ENCODE measurements at regions of chr13 and their contacts with region 1.

Region 1: DNA sequence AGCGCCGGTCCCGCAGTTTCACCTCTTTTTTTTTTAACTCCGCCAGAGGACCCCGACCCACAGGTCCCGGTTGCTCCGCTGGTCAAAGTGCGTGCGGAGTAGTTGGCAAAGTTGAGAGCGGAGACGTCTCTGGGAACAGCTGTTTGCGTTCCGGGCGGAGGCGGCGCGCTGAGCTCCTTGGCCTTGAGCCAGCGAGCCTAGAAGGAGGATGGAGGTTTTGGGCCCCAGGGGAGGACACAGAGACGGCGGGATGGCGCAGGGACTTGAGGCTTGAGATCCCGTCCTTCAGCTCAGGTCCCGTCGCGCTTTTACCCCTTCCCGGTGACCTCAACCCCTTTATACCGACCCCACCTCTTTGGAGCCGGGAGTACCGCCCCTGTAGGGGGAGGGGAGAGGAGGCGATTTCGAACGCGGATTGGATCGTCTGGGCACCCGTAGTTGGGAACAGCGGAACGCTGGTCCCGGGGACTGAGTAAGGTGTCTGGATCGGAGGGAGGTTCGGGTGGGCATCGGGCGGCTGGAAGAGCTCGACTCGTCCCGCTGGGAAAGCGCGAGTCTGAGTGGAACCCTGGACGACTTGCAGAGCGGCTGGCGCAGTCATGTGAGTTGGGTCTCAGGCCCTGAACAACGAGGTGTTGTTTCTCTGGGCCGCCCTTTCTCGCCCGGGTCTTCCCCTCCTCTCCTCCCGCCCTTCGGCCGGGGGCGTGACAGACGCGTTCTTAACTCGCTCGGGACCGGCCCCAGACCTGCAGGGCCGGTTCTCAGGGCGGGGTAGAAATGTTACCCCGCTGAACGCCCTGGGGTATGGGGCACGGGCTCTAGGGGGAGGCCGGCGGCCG is at the start of gene WBP4:
- DNase-seq: peak; percentile 93
- ATAC-seq: peak; percentile 77
- H3K4me3 Mint-ChIP-seq: peak within 1 kb of the TSS; percentile 98
- H3K27ac Mint-ChIP-seq: peak within 1 kb of the TSS; percentile 100
- H3K4me1 Mint-ChIP-seq: peaks cover 57% of the 10 kb centered on the region
- H3K27me3 Mint-ChIP-seq: no peaks in the 10 kb centered on the region
- total RNA-seq, gene WBP4: 13.3 to 16.2 TPM

Region 2: GRCh38 chr13:39655569-39656324 is 1405.5 kb before region 1 on chr13 and contains the start of gene COG6:
- CTCF ChIA-PET with region 1: no interaction called
- POLR2A ChIA-PET with region 1: no interaction called
- intact Hi-C with region 1: loop called in 1 of 2 experiments (anchors 2 kb)
- DNase-seq: peak; percentile 94
- ATAC-seq: peak; percentile 94
- H3K4me3 Mint-ChIP-seq: peak within 1 kb of the TSS; percentile 98
- H3K27ac Mint-ChIP-seq: peak within 1 kb of the TSS; percentile 93
- H3K4me1 Mint-ChIP-seq: peaks cover 21% of the 10 kb centered on the region
- H3K27me3 Mint-ChIP-seq: no peaks in the 10 kb centered on the region
- total RNA-seq, gene COG6: 27.7 to 28.9 TPM

Region 3: DNA sequence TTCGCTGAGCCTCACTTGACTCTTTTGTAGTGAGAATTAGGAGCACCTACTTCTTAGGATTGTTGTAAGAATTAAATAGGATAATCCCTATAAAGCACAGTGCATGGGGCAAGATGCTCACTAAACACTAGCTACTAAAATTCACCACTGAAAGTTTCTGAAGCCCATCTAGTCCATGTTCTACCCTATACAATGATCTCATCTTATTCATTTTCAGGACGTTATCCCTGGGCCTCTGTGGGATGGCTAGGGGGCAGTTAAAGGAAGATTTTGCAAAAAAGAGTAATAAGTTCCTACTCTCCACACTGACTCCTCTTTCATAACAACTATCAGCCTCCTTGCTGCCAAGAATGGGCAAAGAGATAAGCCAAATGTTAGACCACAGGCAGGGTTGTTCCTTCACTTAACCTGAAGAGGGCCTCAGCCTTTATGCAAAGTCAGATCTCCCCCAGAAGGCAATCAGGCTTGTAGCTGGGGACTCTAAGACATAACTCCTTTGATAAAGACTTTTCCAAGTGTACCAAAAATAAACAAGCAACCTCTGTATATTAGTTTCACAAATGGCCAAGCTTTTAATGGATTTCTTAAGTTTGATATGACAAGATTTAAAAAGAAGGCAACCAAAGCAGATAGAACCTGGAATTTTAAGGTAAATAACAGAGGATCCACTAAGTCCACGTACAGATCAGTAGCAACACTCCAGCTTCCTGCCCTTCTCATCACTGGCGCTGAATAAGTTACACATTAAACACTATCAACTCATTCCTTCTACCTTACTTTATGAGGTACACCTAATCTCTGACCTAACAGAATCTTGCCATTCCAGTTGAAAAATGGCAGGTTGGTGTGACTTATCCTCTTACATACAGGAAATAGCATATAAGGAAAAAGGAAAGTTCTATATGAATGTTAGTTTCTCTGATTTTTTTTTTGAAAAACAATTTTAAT is 86.6 kb before region 1 on chr13:
- CTCF ChIA-PET with region 1: interaction called, 9 read pairs
- POLR2A ChIA-PET with region 1: no interaction called
- intact Hi-C with region 1: loop called in 1 of 2 experiments (anchors 2 kb)
- DNase-seq: peak; percentile 51
- ATAC-seq: peak; percentile 83
- H3K4me3 Mint-ChIP-seq: peak overlapping the region; percentile 45
- H3K27ac Mint-ChIP-seq: peak overlapping the region; percentile 82
- H3K4me1 Mint-ChIP-seq: peaks cover 94% of the 10 kb centered on the region
- H3K27me3 Mint-ChIP-seq: no peaks in the 10 kb centered on the region

Region 4: GRCh38 chr13:41075034-41075433 is 13.7 kb after region 1 on chr13:
- CTCF ChIA-PET with region 1: interaction called, 5 read pairs
- POLR2A ChIA-PET with region 1: interaction called, 10 read pairs
- intact Hi-C with region 1: no loop called
- DNase-seq: peak; percentile 32
- ATAC-seq: no peak
- H3K4me3 Mint-ChIP-seq: no peak overlapping the region
- H3K27ac Mint-ChIP-seq: no peak overlapping the region
- H3K4me1 Mint-ChIP-seq: peaks cover 2% of the 10 kb centered on the region
- H3K27me3 Mint-ChIP-seq: no peaks in the 10 kb centered on the region

Region 5: GRCh38 chr13:41263261-41264027 is 202.2 kb after region 1 on chr13 and contains the start of gene MTRF1:
- CTCF ChIA-PET with region 1: no interaction called
- POLR2A ChIA-PET with region 1: no interaction called
- intact Hi-C with region 1: loop called (anchors 1 to 2 kb)
- DNase-seq: peak; percentile 89
- ATAC-seq: peak; percentile 93
- H3K4me3 Mint-ChIP-seq: peak within 1 kb of the TSS; percentile 80
- H3K27ac Mint-ChIP-seq: peak within 1 kb of the TSS; percentile 95
- H3K4me1 Mint-ChIP-seq: peaks cover 12% of the 10 kb centered on the region
- H3K27me3 Mint-ChIP-seq: no peaks in the 10 kb centered on the region
- total RNA-seq, gene MTRF1: 19.7 to 22.1 TPM

Region 6: DNA sequence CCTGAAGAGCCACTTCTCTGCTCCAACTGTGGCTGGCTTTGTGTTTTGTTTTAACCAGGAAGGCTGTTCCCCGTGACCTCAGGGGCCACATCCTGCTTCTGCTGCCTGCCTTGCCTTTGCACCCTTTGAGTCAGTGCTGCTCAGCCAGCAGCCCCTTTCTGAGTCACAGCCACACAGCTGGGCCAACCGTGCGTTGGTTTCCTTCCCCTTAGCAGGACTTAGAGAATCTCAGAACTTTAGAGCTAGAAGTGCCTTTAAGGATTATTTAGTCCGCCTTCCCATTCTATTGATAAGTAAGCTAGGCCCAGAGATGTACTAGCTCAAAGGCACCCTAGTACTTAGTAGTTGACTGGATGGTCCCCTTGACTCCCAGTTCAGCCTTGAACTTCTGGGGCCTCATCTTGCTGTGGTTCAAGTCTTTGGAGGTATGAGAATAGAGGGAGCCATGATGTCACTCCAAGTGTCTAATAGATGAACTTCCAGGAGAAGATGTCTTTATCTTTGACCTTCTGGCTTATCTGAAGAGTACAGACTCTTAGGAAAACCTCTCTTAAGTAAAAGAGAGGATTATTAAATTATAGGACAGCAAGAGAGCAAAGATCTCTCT is 404.1 kb after region 1 on chr13:
- CTCF ChIA-PET with region 1: no interaction called
- POLR2A ChIA-PET with region 1: no interaction called
- intact Hi-C with region 1: loop called in 1 of 2 experiments (anchors 2 kb)
- DNase-seq: peak; percentile 95
- ATAC-seq: peak; percentile 84
- H3K4me3 Mint-ChIP-seq: peak overlapping the region; percentile 82
- H3K27ac Mint-ChIP-seq: peak overlapping the region; percentile 98
- H3K4me1 Mint-ChIP-seq: peaks cover 91% of the 10 kb centered on the region
- H3K27me3 Mint-ChIP-seq: no peaks in the 10 kb centered on the region

Measured in activated CD4-positive, alpha-beta T cell treated with anti-CD3 and anti-CD28 coated beads for 36 hours (primary cell).